IMR-90 (cell line): ENCODE measurements at regions of chr14 and their contacts with region 1.

Region 1: GRCh38 chr14:23320774-23321571 is at the start of gene PABPN1:
- DNase-seq: peak; percentile 100
- ATAC-seq: peak; percentile 90
- H3K4me3 ChIP-seq: peak within 1 kb of the TSS; percentile 99
- H3K27ac ChIP-seq: peak within 1 kb of the TSS; percentile 88
- H3K4me1 ChIP-seq: peaks cover 6% of the 10 kb centered on the region; the same call in 1 of the 2 replicates
- H3K27me3 ChIP-seq: no peaks in the 10 kb centered on the region
- CTCF ChIP-seq: no peak
- POLR2A ChIP-seq: no peak
- RAD21 ChIP-seq: no peak
- total RNA-seq, gene PABPN1: 74.4 and 104 TPM in 2 replicates

Region 2: GRCh38 chr14:22691171-22691570 is 629.8 kb before region 1 on chr14:
- CTCF ChIA-PET with region 1: no interaction called
- POLR2A ChIA-PET with region 1: no interaction called
- dilution Hi-C with region 1: no loop called
- in situ Hi-C with region 1: no loop called
- intact Hi-C with region 1: no loop called
- DNase-seq: peak; percentile 72
- ATAC-seq: peak; percentile 66
- H3K4me3 ChIP-seq: no peak overlapping the region
- H3K27ac ChIP-seq: no peak overlapping the region
- H3K4me1 ChIP-seq: peaks cover 2% of the 10 kb centered on the region; the same call in 1 of the 2 replicates
- H3K27me3 ChIP-seq: peaks cover 18% of the 10 kb centered on the region
- CTCF ChIP-seq: no peak
- POLR2A ChIP-seq: no peak
- RAD21 ChIP-seq: no peak

Region 3: DNA sequence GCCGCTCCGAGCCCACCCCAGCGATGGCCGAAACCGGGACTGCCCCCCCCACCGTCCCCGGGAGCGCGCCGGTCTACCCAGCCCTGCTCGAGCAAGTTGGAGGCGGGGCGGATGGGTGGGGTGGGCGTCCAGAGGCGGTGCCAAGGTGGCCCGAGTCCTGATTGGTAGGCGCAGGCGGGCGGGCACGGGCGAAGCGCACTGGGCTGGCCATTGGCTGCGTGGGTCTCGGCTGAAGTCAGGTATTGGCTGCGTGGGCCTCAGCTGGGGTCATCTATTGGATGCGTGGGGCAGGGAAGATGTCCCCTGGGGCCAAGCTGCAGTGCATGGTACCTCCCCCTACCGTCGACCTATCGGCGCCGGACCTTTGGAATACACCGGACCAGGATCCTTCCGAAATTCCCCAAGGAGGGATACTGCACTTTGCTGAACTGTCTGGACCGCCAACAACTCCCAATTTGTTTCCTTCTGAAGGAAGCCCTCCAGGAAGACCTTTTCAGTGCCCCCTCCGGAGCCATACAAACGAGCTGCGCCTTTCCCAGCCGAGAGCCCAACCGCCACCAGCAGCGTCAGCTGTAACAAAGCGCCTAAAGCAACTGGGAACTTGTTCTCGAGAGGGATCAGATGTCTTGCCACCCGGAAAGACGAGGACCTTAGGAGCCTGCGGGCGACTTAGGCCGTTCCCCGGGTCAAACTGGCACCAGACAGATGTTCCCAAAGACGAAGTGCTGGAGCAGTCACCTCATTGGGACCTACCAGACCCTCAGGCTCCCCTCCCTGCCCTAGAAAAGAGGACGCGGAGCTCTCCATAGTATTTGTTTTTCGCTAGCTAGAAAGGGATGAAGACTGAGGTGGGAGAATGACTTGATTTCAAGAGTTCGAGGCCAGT is 34.7 kb before region 1 on chr14 and contains the start of gene HOMEZ:
- CTCF ChIA-PET with region 1: no interaction called
- POLR2A ChIA-PET with region 1: no interaction called
- dilution Hi-C with region 1: no loop called
- in situ Hi-C with region 1: no loop called
- intact Hi-C with region 1: loop called (anchors 1 kb)
- DNase-seq: peak; percentile 97
- ATAC-seq: peak; percentile 98
- H3K4me3 ChIP-seq: peak within 1 kb of the TSS; percentile 95
- H3K27ac ChIP-seq: peak within 1 kb of the TSS; percentile 51
- H3K4me1 ChIP-seq: peaks cover 7% of the 10 kb centered on the region
- H3K27me3 ChIP-seq: no peaks in the 10 kb centered on the region; the same call in 1 of the 2 replicates
- CTCF ChIP-seq: 0 out of 2 replicates have a peak, but pooled peaks have one; percentile 7
- POLR2A ChIP-seq: peak; percentile 28; the same call in 1 of the 2 replicates
- RAD21 ChIP-seq: no peak
- total RNA-seq, gene HOMEZ: 5.8 and 7.7 TPM in 2 replicates

Region 4: GRCh38 chr14:23379366-23380196 is 58.6 kb after region 1 on chr14:
- CTCF ChIA-PET with region 1: interaction called, 12 read pairs
- POLR2A ChIA-PET with region 1: no interaction called
- dilution Hi-C with region 1: no loop called
- in situ Hi-C with region 1: loop called (anchors 10 kb)
- intact Hi-C with region 1: no loop called
- DNase-seq: peak; percentile 17
- ATAC-seq: peak; percentile 85
- H3K4me3 ChIP-seq: no peak overlapping the region
- H3K27ac ChIP-seq: no peak overlapping the region
- H3K4me1 ChIP-seq: no peaks in the 10 kb centered on the region
- H3K27me3 ChIP-seq: peaks cover 39% of the 10 kb centered on the region; the same call in 1 of the 2 replicates
- CTCF ChIP-seq: peak; percentile 93
- POLR2A ChIP-seq: no peak
- RAD21 ChIP-seq: peak; percentile 91

Region 5: DNA sequence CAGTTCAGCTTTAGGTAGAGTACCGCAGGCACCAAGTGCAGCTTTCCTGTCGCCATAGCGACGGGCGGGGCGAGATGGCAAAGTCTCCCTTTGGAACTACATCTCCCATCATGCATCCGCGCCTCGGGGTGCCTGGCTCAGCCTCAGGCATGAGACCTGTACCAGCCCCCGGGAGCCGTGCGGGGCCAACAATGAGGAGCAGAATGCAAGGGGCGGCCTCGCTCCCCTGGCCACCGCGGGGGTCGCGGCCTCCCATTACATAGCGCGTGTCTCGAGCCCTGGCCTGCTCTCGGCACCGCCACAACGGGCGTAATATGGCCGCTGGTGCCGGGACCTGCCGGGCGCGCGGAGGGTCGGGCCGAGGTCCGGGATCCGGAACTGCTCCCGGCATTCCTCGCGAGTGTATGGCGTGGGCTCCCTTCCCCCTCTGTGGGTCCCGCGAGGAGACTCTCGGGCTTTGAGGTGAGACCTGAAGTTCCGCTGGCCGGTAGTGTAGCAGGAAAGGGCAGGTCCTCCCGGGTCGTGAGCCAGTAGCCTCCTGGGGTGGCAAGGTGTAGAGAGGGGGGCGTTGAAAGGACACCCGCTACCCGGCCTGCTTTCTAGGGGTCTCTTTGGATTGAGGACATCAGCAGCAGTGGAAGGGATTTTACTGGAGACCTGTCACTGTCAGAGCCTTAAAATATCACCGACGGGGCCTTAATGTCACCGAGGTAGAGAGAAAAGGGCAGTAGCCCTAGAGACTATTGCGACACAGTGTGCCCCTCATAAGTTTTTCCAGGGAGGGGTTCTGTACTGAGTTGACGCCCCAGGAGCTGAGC is 235.1 kb after region 1 on chr14 and contains the start of gene THTPA:
- CTCF ChIA-PET with region 1: no interaction called
- POLR2A ChIA-PET with region 1: no interaction called
- dilution Hi-C with region 1: no loop called
- in situ Hi-C with region 1: loop called (anchors 10 kb)
- intact Hi-C with region 1: no loop called
- DNase-seq: peak; percentile 83
- ATAC-seq: peak; percentile 91
- H3K4me3 ChIP-seq: peak within 1 kb of the TSS; percentile 77
- H3K27ac ChIP-seq: peak within 1 kb of the TSS; percentile 85
- H3K4me1 ChIP-seq: peaks cover 7% of the 10 kb centered on the region
- H3K27me3 ChIP-seq: no peaks in the 10 kb centered on the region
- CTCF ChIP-seq: no peak
- POLR2A ChIP-seq: peak; percentile 69; the same call in 1 of the 2 replicates
- RAD21 ChIP-seq: no peak
- total RNA-seq, gene THTPA: 5.0 and 5.8 TPM in 2 replicates